ENCODE measurements at regions of chr5 and their contacts with region 1.

Region 1: GRCh38 chr5:39517800-39518199 is 93.0 kb upstream of the DAB2 start:
- DNase-seq: no peak
- H3K4me3 ChIP-seq: no peak overlapping the region
- H3K27ac ChIP-seq: peak overlapping the region in 1 of 4 donors; percentile 70
- H3K4me1 ChIP-seq: peaks cover 6 to 39% (median 35%) of the 10 kb centered on the region in 4 donors
- H3K27me3 ChIP-seq: no peaks in the 10 kb centered on the region
- CTCF ChIP-seq: no peak
- EP300 ChIP-seq: no peak
- POLR2A ChIP-seq: no peak

Region 2: GRCh38 chr5:39424736-39425637 is 92.8 kb before region 1 on chr5 and contains the start of gene DAB2:
- intact Hi-C with region 1: loop called (anchors 5 kb)
- DNase-seq: peak; percentile 97
- H3K4me3 ChIP-seq: peak within 1 kb of the TSS; percentile 60 to 75 (median 66)
- H3K27ac ChIP-seq: peak within 1 kb of the TSS; percentile 84 to 89 (median 86)
- H3K4me1 ChIP-seq: peaks cover 23 to 67% (median 61%) of the 10 kb centered on the region in 4 donors
- H3K27me3 ChIP-seq: no peaks in the 10 kb centered on the region
- CTCF ChIP-seq: peak; percentile 42 to 57 (median 49)
- EP300 ChIP-seq: no peak
- POLR2A ChIP-seq: peak; percentile 58
- total RNA-seq, gene DAB2: 48.7 to 84.3 (median 55.1) TPM

Measured in esophagus muscularis mucosa (tissue), 4 donors.